GM23248 (cell line): ENCODE measurements at regions of chr4 and their contacts with region 1.

Region 1: DNA sequence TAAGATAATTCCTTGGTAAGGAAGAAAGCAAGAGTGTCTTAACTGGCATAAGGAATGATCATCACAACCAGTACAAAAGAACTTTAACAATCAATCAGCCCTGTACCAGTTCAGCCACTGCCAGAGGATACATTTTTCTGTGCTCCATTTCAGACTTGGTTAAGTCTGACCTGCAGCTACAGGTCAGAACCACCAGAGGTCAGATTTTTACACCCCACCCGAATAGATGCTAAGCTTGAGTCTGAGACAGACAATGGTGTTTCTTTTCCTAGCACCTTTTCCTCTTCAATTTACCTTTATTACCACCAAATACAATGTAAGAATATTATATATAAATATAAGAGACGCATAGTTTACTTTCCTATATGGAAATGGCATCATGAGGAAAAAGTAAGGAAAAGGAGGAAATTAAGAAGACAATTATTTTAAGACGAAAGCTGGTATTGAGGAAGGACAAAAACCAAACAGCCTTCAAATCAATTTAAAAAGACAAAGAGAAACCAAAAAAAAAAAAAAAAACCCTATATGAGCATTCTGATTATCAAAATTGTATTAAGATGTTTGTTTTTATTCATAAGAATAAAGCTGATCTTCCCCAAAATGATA is 215.3 kb upstream of the TTC29 start:
- DNase-seq: peak; percentile 73
- H3K4me3 ChIP-seq: no peak overlapping the region
- H3K27ac ChIP-seq: no peak overlapping the region
- H3K4me1 ChIP-seq: 0 out of 2 replicates have a peak, but pooled peaks cover 3% of the 10 kb centered on the region
- H3K27me3 ChIP-seq: no peaks in the 10 kb centered on the region

Region 2: GRCh38 chr4:147590249-147590920 is 429.4 kb after region 1 on chr4:
- in situ Hi-C with region 1: loop called (anchors 10 kb)
- DNase-seq: peak; percentile 64
- H3K4me3 ChIP-seq: peak overlapping the region; percentile 13; the same call in 1 of the 2 replicates
- H3K27ac ChIP-seq: no peak overlapping the region
- H3K4me1 ChIP-seq: peaks cover 9% of the 10 kb centered on the region
- H3K27me3 ChIP-seq: no peaks in the 10 kb centered on the region

Region 3: GRCh38 chr4:147683717-147684700 is 523.0 kb after region 1 on chr4 and contains the start of gene PRMT9:
- in situ Hi-C with region 1: no loop called
- DNase-seq: peak; percentile 96
- H3K4me3 ChIP-seq: peak within 1 kb of the TSS; percentile 96
- H3K27ac ChIP-seq: peak within 1 kb of the TSS; percentile 85
- H3K4me1 ChIP-seq: peaks cover 7% of the 10 kb centered on the region; the same call in 1 of the 2 replicates
- H3K27me3 ChIP-seq: no peaks in the 10 kb centered on the region
- total RNA-seq, gene PRMT9: 6.4 and 8.6 TPM in 2 replicates